HAP-1 (cell line): ENCODE measurements at regions of chr10 and their contacts with region 1.

Region 1: DNA sequence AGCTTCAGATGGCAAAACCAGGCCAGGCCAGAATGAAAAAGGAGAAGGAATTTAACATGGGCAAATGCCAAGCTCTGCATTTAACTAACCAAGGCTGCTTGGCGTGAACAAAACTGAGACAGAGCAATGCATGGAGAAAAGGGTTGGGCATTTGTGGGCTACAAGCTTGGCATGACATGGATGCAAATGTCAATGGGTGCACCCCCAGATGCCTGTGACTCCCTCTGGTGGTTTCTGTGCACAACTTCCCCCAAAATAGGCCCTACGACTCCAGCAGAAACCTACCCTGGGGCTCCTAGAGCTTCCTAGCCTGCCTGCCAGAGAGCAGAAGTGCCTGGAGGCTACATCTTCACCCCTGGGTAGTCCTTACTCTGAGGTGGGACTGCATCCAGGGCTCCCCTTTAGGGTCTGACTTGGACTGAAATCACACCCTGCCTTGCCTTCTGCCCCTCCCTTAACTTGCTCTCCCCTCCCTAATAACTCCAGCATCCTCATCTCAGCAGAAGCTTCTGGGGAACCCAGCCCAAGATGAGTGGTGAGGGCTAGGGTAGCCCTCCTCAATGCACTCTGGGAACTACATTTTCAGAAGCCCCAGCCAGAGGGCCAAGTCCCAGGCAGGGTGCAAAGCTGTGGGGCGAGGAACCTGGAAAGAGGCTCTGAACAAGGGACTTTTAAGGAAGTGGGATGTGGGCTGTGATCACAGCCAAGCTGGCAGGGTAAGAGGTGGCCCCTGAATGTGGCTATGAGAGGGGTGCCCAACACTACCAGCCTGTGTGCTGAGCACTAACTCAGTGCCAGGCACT is 11.3 kb downstream of the GPRIN2 start:
- DNase-seq: peak in 1 of 2 experiments; percentile 15
- H3K4me3 ChIP-seq: no peak overlapping the region
- H3K4me1 ChIP-seq: no peaks in the 10 kb centered on the region
- H3K27me3 ChIP-seq: peaks cover 2% of the 10 kb centered on the region; the same call in 1 of the 2 replicates

Region 2: DNA sequence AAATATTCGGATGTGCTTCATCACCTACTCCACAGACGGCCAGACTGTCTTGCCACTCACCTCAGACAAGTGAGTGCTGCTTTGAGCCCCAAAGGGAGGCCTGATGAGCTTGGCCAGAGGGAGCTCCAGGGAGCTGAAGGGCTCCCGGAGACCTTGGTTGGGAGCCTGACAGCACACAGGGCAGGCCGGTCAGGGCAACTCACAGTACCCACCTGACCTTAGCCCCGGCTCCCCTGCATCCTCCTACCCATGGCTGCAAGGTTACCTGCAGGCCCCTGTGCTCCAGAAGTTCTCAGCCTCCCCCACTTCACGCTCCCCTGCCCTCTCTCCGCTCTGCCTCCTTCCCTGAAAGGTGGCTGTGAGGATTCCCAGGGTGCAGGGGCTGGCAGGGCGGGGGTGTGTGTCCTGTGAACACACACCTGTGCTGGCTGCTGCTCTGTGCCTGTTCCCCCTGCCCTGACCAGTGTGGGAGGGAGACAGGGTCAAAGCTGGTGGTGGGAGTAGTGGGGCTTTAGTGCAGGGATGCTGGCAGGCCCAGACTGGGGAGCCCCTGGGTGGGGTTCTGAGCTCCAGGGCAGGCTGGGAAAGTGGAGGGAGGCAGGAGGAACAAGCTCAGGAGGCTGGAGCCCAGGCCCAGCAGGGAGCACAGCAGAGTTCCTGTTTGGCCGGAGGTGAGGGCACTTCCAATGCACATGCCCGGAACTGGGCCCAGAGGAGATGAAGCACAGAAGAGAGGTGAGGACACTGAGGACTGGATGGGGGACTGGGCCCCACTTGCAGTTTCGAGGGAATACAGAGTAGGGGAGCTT is 251.2 kb before region 1 on chr10:
- in situ Hi-C with region 1: no loop called
- DNase-seq: peak in 1 of 2 experiments; percentile 21
- H3K4me3 ChIP-seq: no peak overlapping the region
- H3K4me1 ChIP-seq: no peaks in the 10 kb centered on the region
- H3K27me3 ChIP-seq: no peaks in the 10 kb centered on the region

Region 3: DNA sequence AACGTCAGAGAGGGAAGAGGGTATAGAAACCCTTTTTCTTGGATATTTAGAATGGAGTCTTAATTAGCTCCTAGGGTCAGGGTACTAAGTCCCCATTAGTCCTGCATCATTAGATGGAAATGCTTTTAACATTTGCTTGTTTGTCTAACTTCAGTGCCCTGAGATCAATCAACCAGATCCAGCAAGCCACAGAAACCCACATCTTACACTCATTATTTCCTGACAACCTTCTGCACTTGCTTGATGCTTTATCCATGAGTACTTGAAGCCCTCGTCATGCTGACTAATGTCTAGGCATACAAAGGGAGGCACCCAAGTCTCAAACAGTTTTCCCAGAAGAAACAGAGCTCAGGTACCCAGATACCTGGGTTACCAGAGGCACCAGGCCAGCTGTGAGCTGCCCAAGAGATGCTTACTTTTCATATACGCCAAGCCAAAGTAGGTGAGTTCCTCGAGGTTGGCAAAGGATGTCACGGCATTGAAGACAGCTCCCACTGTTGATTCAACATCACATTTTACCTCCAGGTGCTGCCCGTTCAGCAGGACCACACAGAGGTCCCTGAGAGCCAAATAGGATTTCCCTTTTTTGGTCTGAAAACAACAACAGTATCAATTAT is 1686.6 kb after region 1 on chr10:
- in situ Hi-C with region 1: loop called (anchors 25 kb)
- DNase-seq: no peak
- H3K4me3 ChIP-seq: no peak overlapping the region
- H3K4me1 ChIP-seq: no peaks in the 10 kb centered on the region
- H3K27me3 ChIP-seq: no peaks in the 10 kb centered on the region